Naive thymus-derived CD8-positive, alpha-beta T cell (primary cell): ENCODE measurements at regions of chr17 and their contacts with region 1.

Region 1: DNA sequence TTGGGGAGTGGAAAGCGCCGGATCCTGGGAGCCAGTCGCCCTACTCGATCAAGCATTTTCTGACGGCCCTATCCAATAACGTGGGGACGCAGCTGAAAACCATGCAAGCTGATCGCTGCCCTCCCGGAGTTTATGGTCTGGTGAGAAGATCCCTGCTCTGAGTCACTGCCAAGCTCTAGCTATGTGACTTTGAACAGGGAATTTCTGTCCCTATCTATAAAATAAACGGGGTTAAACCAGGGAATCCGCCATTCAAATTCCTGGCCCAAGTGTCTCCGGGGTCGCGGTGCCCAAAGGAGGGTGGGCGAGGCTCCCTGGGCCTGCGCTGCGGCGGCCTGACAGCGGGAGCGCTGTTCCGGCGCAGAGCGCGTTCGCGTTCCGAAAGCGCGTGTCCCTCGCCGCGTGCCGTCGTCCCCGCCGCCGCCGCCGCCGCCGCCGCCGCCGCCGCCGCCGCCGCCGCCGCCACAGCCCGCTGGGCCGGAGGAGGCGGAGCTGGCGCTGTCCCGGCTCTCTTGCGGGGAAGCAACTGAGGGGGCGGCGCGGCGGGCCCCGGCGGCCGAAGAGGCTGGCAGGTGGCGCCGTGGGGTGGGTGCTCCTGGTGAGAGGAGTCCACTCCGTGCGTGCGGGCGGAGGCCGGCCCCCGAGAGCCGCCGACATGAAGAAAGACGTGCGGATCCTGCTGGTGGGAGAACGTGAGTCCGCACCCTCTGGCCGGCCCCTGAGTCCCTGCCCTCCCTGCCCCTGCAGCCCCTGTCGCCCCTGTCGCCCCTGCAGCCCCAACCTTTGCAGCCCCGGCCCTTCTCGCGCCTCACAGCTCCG is at the start of gene RHOT1:
- DNase-seq: peak; percentile 48 to 81 (median 75)
- ATAC-seq: peak; percentile 82 to 84
- H3K4me3 Mint-ChIP-seq: peak within 1 kb of the TSS; percentile 94 to 100 (median 96)
- H3K27ac Mint-ChIP-seq: peak within 1 kb of the TSS; percentile 89 to 97 (median 92)
- H3K4me1 Mint-ChIP-seq: peaks cover 5 to 51% (median 32%) of the 10 kb centered on the region in 4 donors
- H3K27me3 Mint-ChIP-seq: no peaks in the 10 kb centered on the region
- polyA plus RNA-seq, gene RHOT1: 17.8 to 26.7 (median 24.7) TPM

Region 2: DNA sequence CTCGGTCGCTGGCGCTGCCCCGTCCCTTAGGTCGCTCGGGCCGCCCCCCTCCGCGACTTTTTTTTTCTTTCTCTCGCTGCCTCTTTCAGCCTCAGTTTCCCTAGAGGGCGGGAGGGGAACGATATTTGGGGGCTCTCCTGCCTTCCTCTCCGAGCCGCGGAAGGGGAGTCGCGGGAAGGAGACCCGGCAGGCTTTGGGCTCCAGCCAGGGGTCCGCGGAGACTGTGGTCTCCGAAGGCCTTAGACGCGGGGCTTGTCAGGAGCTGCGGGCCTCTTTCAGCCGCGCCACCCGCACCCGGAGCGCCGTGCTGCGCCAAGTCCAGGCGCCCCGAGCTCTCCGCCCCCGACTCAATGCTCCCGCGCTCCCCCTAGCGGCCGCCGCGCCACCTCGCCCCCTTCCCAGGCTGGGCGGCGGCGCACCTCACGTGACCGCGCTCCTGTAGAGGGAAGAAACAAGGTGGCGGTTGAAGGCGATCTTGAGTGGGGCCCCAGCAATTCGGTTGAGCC is 135.2 kb before region 1 on chr17 and contains the start of gene LRRC37B:
- POLR2A ChIA-PET with region 1: interaction called, 27 read pairs
- DNase-seq: peak; percentile 79 to 90 (median 88)
- ATAC-seq: peak; percentile 90 to 91
- H3K4me3 Mint-ChIP-seq: peak within 1 kb of the TSS; percentile 89 to 97 (median 94)
- H3K27ac Mint-ChIP-seq: peak within 1 kb of the TSS; percentile 90 to 98 (median 94)
- H3K4me1 Mint-ChIP-seq: peaks cover 14 to 45% (median 40%) of the 10 kb centered on the region in 4 donors
- H3K27me3 Mint-ChIP-seq: no peaks in the 10 kb centered on the region
- polyA plus RNA-seq, gene LRRC37B: 6.8 to 9.6 (median 8.2) TPM

Region 3: GRCh38 chr17:32191306-32191705 is 49.1 kb after region 1 on chr17:
- POLR2A ChIA-PET with region 1: no interaction called
- DNase-seq: no peak
- ATAC-seq: no peak
- H3K4me3 Mint-ChIP-seq: no peak overlapping the region
- H3K27ac Mint-ChIP-seq: no peak overlapping the region
- H3K4me1 Mint-ChIP-seq: peaks cover 0 to 2% (median under 1%) of the 10 kb centered on the region in 4 donors
- H3K27me3 Mint-ChIP-seq: no peaks in the 10 kb centered on the region